Right cardiac atrium (tissue), 5 donors: ENCODE measurements at regions of chr18 and their contacts with region 1.

Region 1: GRCh38 chr18:37537868-37538525 is 27.6 kb downstream of the CELF4 start:
- DNase-seq: peak; percentile 74 to 90 (median 90)
- ATAC-seq: peak; percentile 72 to 86
- H3K4me3 ChIP-seq: no peak overlapping the region
- H3K27ac ChIP-seq: no peak overlapping the region
- H3K4me1 ChIP-seq: no peaks in the 10 kb centered on the region
- H3K27me3 ChIP-seq: no peaks in the 10 kb centered on the region

Region 2: GRCh38 chr18:37341016-37341415 is 197.0 kb before region 1 on chr18:
- intact Hi-C with region 1: loop called in 3 of 4 experiments (anchors 5 to 10 kb)
- DNase-seq: no peak
- ATAC-seq: no peak
- H3K4me3 ChIP-seq: no peak overlapping the region
- H3K27ac ChIP-seq: no peak overlapping the region
- H3K4me1 ChIP-seq: no peaks in the 10 kb centered on the region
- H3K27me3 ChIP-seq: no peaks in the 10 kb centered on the region

Region 3: GRCh38 chr18:37346048-37346447 is 191.9 kb before region 1 on chr18:
- intact Hi-C with region 1: loop called in 3 of 4 experiments (anchors 5 to 10 kb)
- DNase-seq: no peak
- ATAC-seq: no peak
- H3K4me3 ChIP-seq: no peak overlapping the region
- H3K27ac ChIP-seq: no peak overlapping the region
- H3K4me1 ChIP-seq: no peaks in the 10 kb centered on the region
- H3K27me3 ChIP-seq: no peaks in the 10 kb centered on the region

Region 4: DNA sequence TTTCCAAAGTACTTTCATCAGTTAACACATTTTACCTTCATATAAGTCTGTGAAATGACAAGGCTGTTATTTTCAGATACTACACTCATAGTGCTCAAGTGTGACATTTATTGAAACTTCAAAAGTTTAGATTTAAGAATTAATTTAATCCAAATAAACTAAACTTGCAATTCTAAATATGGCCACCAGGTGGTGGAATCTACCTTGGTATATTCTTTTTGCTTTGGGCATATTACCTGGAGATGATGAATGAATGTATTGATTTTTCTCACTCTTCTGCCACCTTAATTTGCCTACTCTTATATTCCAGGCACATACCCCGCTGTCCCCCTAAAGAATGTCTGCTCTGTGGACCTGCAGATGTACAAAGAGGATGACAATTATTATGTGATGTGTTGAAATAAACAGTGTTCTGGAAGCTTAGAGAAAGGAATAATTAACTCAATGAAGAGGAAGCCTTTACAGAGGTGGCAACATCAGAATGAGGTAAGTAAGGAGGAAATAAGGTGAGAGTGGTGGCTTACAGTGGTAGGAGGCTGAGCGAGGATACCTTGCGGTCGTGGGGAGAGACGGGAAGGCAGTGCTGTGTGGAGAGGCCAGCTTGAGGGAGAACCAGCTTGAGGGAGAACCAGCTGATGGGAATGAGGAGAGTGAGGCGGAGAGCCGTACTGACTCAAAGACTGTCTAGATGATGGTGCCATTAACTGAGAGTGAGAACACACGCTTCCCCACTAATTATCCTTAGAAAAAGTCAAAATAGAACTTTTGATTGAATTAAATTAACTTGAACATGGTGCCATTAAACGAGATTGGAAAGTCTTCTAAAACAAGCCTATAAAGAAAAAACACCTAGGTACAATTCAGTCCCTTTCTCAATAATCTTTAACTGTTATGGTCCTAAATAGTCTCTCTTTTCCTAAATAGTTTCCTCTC is 151.9 kb before region 1 on chr18:
- intact Hi-C with region 1: loop called (anchors 2 to 5 kb)
- DNase-seq: no peak
- ATAC-seq: no peak
- H3K4me3 ChIP-seq: no peak overlapping the region
- H3K27ac ChIP-seq: no peak overlapping the region
- H3K4me1 ChIP-seq: no peaks in the 10 kb centered on the region
- H3K27me3 ChIP-seq: no peaks in the 10 kb centered on the region

Region 5: DNA sequence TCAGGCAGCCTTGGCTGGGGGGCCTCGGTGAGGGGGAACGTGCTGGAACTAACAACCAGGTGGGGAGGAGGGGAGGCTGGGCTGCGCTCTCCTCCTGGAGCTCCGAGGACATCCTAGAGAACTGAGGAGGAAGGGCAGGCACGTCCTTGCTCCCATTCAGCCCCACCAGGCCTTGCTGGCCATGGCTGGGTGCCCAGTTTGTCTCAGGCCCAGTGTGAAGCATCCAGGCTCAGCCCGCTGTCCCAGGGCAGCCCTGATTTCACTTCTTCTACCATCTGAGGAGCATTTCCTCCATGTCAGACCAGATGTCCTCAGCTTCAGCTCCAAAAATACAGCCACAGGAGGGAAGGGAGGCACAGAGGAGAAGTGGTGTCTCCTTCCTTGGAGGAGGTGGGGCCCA is 97.8 kb before region 1 on chr18:
- intact Hi-C with region 1: loop called in 2 of 4 experiments (anchors 5 kb)
- DNase-seq: peak in 1 of 3 donors; percentile 61
- ATAC-seq: no peak
- H3K4me3 ChIP-seq: no peak overlapping the region
- H3K27ac ChIP-seq: no peak overlapping the region
- H3K4me1 ChIP-seq: no peaks in the 10 kb centered on the region
- H3K27me3 ChIP-seq: no peaks in the 10 kb centered on the region

Region 6: GRCh38 chr18:37869051-37869450 is 331.1 kb after region 1 on chr18:
- intact Hi-C with region 1: no loop called
- DNase-seq: no peak
- ATAC-seq: no peak
- H3K4me3 ChIP-seq: no peak overlapping the region
- H3K27ac ChIP-seq: no peak overlapping the region
- H3K4me1 ChIP-seq: no peaks in the 10 kb centered on the region
- H3K27me3 ChIP-seq: no peaks in the 10 kb centered on the region